ENCODE measurements at regions of chr11 and their contacts with region 1.

Region 1: GRCh38 chr11:122754553-122755322 is 83.6 kb upstream of the CRTAM start:
- DNase-seq: no peak
- ATAC-seq: peak; percentile 43
- H3K4me3 ChIP-seq: no peak overlapping the region
- H3K27ac ChIP-seq: peak overlapping the region in 1 of 2 donors; percentile 39
- H3K4me1 ChIP-seq: peaks cover under 1 to 44% of the 10 kb centered on the region in 2 donors
- H3K27me3 ChIP-seq: no peaks in the 10 kb centered on the region
- CTCF ChIP-seq: peak in 1 of 2 donors; percentile 31

Region 2: DNA sequence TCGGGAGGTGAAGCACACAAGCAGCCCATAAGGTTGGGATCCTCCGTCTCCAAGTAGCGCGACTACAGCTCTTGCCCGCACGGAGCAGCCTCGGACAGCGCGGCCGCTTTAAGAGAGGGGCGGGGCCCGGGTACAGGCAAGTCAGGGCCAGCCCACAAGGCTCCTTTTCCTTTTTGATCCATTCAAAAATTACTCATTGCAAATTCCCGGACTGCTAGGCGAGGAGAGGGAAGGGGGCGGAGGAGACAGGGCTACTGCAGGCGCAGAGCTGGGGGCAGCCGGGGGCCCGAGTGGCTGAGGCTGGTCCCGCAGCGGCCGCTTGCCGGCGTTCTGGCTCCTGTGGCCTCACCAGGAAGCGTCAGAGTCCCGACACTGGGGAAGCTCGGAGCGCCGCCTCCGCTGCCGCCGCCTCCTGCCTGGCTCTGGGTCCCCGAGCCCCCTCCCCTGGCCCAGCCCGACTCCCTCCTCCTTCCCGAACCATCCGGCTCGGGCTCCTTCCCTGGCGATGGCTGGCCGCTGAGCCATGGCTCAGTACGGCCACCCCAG is 99.1 kb before region 1 on chr11 and contains the start of gene UBASH3B:
- intact Hi-C with region 1: loop called in 1 of 2 experiments (anchors 10 kb)
- DNase-seq: peak; percentile 73 to 96 (median 82)
- ATAC-seq: peak; percentile 86
- H3K4me3 ChIP-seq: peak within 1 kb of the TSS; percentile 87 to 95
- H3K27ac ChIP-seq: peak within 1 kb of the TSS; percentile 91 to 93
- H3K4me1 ChIP-seq: peaks cover 3 to 59% of the 10 kb centered on the region in 2 donors
- H3K27me3 ChIP-seq: peaks cover 0 to 6% of the 10 kb centered on the region in 2 donors
- CTCF ChIP-seq: no peak
- polyA plus RNA-seq, gene UBASH3B: 4.0 to 7.1 (median 4.9) TPM

Measured in left lung (tissue), 14 donors.